K562 (cell line): ENCODE measurements at regions of chr13 and their contacts with region 1.

Region 1: GRCh38 chr13:35978603-35979316 is 152.4 kb downstream of the DCLK1 start:
- DNase-seq: peak; percentile 25 to 47 (median 34)
- ATAC-seq: peak; percentile 65; the same call in 2 of the 3 replicates
- H3K4me3 ChIP-seq: no peak overlapping the region
- H3K27ac ChIP-seq: no peak overlapping the region
- H3K4me1 ChIP-seq: no peaks in the 10 kb centered on the region
- H3K27me3 ChIP-seq: no peaks in the 10 kb centered on the region
- CTCF ChIP-seq: peak; percentile 18 to 65 (median 50); a peak in 5 of 6 replicates
- EP300 ChIP-seq: no peak
- POLR2A ChIP-seq: no peak
- RAD21 ChIP-seq: peak; percentile 73 to 78

Region 2: GRCh38 chr13:36275190-36276002 is 296.6 kb after region 1 on chr13:
- CTCF ChIA-PET with region 1: interaction called, 18 read pairs
- POLR2A ChIA-PET with region 1: no interaction called
- in situ Hi-C with region 1: no loop called
- intact Hi-C with region 1: loop called (anchors 1 kb)
- DNase-seq: peak in 1 of 4 experiments; percentile 27
- ATAC-seq: no peak; the same call in 2 of the 3 replicates
- H3K4me3 ChIP-seq: no peak overlapping the region
- H3K27ac ChIP-seq: no peak overlapping the region
- H3K4me1 ChIP-seq: no peaks in the 10 kb centered on the region
- H3K27me3 ChIP-seq: no peaks in the 10 kb centered on the region
- CTCF ChIP-seq: peak in 2 of 3 experiments; percentile 22 to 53; a peak in 2 of 6 replicates
- EP300 ChIP-seq: no peak
- POLR2A ChIP-seq: no peak
- RAD21 ChIP-seq: peak; percentile 25 to 57; a peak in 3 of 4 replicates

Region 3: GRCh38 chr13:36736119-36736726 is 757.5 kb after region 1 on chr13:
- CTCF ChIA-PET with region 1: no interaction called
- POLR2A ChIA-PET with region 1: no interaction called
- in situ Hi-C with region 1: no loop called
- intact Hi-C with region 1: loop called (anchors 2 kb)
- DNase-seq: peak; percentile 30 to 57 (median 36)
- ATAC-seq: no peak
- H3K4me3 ChIP-seq: no peak overlapping the region
- H3K27ac ChIP-seq: no peak overlapping the region
- H3K4me1 ChIP-seq: no peaks in the 10 kb centered on the region
- H3K27me3 ChIP-seq: no peaks in the 10 kb centered on the region
- CTCF ChIP-seq: peak; percentile 37 to 64 (median 40); a peak in 4 of 6 replicates
- EP300 ChIP-seq: no peak
- POLR2A ChIP-seq: no peak
- RAD21 ChIP-seq: peak; percentile 33 to 46; a peak in 2 of 4 replicates